Posterior vena cava (tissue), 2 donors: ENCODE measurements at regions of chr1 and their contacts with region 1.

Region 1: DNA sequence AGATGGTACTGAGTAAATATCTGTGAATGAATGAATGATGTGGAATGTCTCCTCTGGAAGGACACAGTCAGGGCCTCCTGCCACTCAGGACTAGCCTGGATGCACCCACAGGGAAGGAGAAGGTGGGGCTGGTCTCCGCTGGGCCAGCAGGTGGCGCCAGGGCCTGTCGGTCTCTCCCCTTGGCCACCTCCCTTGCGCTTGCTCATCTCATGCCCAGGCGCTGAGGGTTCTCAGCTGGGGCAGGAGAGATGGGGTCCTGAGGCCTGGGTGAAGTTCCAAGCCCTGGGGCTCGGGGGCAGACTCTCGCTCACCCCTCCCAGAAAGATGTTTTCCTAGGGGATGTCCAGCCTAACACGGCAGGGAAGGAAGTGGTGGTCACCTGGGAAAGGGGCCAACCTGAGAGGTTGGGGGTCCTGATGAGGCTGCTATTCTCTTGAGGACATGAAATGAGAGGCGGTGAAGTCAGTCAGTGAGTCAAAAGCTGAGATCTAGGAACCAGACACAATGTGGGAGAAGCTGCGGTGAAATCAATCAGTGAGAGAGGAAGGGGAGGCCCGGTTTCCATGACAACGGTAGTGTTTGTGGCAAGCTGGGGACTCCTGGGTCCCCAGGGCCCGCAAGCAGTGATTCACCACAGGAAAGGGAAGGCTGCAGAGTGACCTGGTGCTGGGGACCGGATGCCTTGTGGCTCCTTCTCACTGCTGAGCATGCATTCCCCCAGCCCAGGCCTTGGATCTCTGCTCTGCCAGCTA is 14.6 kb upstream of the MEX3A start:
- DNase-seq: peak; percentile 97

Region 2: DNA sequence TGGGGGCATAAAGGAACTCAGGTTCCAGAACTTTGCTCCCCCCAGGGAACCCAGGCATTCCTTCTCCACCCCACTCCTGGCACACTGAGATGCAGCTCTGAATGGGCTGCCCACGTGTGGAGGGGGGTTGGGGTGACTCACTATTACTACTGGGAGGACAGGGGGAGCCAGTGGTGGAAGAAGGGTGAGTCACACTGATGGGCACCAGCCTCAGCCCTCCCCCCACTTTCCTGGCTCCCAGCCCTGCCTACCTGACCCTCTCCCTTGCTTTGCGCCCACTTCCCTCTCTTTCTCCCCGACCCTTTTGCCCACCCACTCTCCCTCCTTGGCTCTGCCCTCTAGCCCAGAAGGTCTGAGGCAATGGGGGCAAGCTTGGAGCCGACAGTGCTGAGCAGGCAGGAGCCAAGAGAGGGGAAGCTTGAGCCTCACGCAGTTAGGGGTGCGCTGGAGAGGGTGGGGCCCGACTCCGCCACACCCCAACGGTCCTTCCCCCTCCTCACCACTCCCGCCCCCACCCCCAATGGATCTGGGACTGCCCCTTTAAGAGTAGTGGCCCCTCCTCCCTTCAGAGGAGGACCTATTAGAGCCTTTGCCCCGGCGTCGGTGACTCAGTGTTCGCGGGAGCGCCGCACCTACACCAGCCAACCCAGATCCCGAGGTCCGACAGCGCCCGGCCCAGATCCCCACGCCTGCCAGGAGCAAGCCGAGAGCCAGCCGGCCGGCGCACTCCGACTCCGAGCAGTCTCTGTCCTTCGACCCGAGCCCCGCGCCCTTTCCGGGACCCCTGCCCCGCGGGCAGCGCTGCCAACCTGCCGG is 17.5 kb after region 1 on chr1 and contains the start of gene LMNA:
- intact Hi-C with region 1: no loop called
- DNase-seq: peak; percentile 98
- total RNA-seq, gene LMNA: 500 to 599 TPM

Region 3: DNA sequence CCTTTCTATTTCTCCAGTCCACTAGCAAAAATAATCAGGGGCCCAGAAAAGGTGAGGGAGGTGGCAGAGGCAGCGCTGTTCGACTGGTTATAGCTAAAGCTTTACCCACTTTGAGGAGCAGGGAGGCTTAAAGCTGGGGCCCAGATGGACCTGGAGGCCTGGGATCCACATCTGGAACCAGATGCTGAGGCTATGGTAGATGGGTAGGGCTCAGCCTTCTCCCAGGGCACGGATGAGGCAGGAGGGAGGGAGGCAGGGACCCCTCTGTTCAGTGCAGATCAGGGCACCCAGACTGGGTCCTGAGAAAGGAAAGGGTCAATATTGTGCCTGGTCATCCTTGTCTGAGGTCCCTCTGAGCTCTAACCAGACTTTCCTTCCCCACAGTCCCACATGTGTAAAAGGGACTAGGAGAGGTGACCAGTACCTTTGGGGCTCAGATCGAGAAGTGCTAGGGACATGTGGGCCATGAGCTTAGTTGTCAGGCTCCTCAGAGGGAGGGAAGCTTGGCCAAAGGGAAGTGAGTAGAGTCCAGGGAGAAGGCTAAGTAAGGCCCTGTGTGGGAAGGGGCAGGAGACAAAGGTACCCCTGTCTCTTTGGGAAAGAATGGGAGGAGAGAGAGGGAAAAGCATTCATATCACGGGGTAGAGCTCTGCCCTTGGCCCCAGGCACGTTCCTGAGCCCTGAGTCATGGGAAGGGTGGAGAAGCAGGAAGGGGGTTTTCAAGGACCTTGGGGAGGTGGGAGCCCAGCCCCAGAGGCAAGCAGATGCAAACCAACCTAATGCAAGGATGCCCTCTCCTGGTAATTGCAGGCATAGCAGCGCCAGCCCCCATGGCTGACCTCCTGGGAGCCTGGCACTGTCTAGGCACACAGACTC is 33.1 kb after region 1 on chr1:
- intact Hi-C with region 1: loop called (anchors 2 to 5 kb)
- DNase-seq: peak; percentile 96